ENCODE measurements at regions of chr19 and their contacts with region 1.

Region 1: GRCh38 chr19:55258828-55259539 is at the start of gene PPP6R1:
- DNase-seq: peak; percentile 99
- H3K4me3 Mint-ChIP-seq: peak within 1 kb of the TSS; percentile 88
- H3K27ac Mint-ChIP-seq: peak within 1 kb of the TSS; percentile 92
- H3K4me1 Mint-ChIP-seq: peaks cover 34% of the 10 kb centered on the region
- H3K27me3 Mint-ChIP-seq: no peaks in the 10 kb centered on the region
- CTCF ChIP-seq: no peak
- total RNA-seq, gene PPP6R1: 70.6 and 78.9 TPM in 2 replicates

Region 2: GRCh38 chr19:55014717-55015116 is 244.3 kb before region 1 on chr19:
- CTCF ChIA-PET with region 1: no interaction called
- POLR2A ChIA-PET with region 1: no interaction called
- intact Hi-C with region 1: no loop called
- DNase-seq: no peak
- H3K4me3 Mint-ChIP-seq: no peak overlapping the region
- H3K27ac Mint-ChIP-seq: no peak overlapping the region
- H3K4me1 Mint-ChIP-seq: no peaks in the 10 kb centered on the region
- H3K27me3 Mint-ChIP-seq: no peaks in the 10 kb centered on the region
- CTCF ChIP-seq: no peak

Region 3: DNA sequence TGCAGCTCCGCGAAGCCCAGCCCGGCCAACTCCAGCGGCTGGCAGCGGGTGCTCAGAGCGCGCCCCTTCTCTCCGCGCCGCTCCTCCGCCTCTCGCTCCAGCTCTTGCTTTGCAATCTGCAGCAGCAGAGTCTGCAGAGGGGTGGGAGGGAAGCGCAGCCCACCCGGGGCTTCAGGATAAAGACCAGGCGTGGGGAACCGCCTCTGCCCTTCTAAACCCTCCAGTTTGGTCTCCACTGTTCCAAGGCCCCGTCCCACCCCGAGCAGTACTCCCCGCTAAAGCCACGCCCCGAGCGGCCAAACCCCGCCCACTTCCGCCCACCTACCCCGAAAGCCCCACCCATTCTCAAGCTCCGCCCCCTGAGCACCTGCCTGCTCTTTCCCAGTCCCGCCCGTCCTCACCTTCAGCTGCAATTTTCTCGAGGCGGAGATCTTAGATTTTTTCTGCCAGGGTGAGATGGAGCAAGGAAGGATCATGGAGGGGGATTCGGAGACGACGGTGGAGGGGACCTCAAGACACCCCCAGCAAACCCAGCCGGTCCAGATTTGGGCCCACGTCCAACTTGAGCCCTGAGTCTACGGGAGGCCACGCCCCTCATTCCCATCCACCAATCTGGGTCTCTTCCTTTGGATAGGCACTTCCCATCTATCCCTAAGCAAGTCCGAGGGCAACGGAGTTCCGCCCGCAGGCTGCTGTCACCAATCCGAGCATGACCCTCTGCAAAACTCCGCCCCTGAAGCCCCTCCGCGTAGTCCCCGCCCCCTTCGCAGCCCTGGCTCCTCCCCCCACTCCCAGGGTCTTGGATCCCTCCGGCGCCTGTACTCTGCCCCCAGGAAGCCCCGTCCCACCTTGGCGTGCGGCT is 102.6 kb before region 1 on chr19:
- CTCF ChIA-PET with region 1: no interaction called
- POLR2A ChIA-PET with region 1: no interaction called
- intact Hi-C with region 1: no loop called
- DNase-seq: no peak
- H3K4me3 Mint-ChIP-seq: no peak overlapping the region
- H3K27ac Mint-ChIP-seq: no peak overlapping the region
- H3K4me1 Mint-ChIP-seq: peaks cover 27% of the 10 kb centered on the region
- H3K27me3 Mint-ChIP-seq: no peaks in the 10 kb centered on the region
- CTCF ChIP-seq: no peak

Region 4: GRCh38 chr19:55166530-55167268 is 92.3 kb before region 1 on chr19 and contains the start of gene DNAAF3:
- CTCF ChIA-PET with region 1: interaction called, 4 read pairs
- POLR2A ChIA-PET with region 1: interaction called, 19 read pairs
- intact Hi-C with region 1: loop called (anchors 5 kb)
- DNase-seq: peak; percentile 100
- H3K4me3 Mint-ChIP-seq: peak within 1 kb of the TSS; percentile 84
- H3K27ac Mint-ChIP-seq: peak within 1 kb of the TSS; percentile 93
- H3K4me1 Mint-ChIP-seq: peaks cover 10% of the 10 kb centered on the region
- H3K27me3 Mint-ChIP-seq: no peaks in the 10 kb centered on the region
- CTCF ChIP-seq: no peak
- total RNA-seq, gene DNAAF3: 3.9 and 4.9 TPM in 2 replicates

Region 5: DNA sequence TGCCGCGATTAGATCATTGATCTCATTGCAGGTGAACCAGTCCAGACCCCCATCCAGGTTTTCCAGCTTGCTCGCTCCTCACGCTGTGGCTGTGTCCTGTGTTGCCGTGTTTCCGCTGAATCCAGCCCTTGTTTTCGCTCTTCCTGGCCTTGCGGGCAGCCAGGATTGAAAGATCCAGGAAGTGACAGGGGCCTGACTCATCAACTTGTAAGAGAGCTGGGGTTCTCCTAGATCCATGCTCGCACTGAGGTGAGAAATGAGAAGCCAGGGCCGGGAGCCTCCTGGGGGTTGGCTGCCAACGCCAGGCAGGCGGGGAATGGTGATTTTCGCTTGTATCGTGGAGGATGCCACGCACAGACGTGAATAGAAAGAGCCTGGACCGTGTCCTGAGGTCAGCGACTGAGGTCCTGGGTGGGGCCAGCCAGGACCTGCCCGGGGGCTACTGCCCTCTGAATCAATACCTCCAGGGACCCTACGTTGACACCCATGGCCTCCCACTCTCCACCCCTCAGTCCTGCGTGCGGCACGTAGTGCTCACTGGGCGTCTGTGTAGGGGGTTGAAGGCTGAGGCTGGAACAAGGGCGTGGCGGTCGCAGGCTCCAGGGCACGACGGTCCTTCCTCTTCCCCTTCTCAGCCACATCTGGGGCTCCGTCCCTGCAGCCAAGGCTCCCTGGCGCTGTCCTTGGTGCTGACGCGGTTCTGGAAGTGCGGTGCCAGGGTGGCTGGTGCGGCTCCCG is 42.4 kb before region 1 on chr19:
- CTCF ChIA-PET with region 1: interaction called, 3 read pairs
- POLR2A ChIA-PET with region 1: interaction called, 52 read pairs
- intact Hi-C with region 1: loop called (anchors 1 kb)
- DNase-seq: peak; percentile 99
- H3K4me3 Mint-ChIP-seq: peak overlapping the region; percentile 78
- H3K27ac Mint-ChIP-seq: peak overlapping the region; percentile 64
- H3K4me1 Mint-ChIP-seq: peaks cover 16% of the 10 kb centered on the region
- H3K27me3 Mint-ChIP-seq: no peaks in the 10 kb centered on the region
- CTCF ChIP-seq: no peak

Region 6: GRCh38 chr19:55289117-55289796 is 30.3 kb after region 1 on chr19:
- CTCF ChIA-PET with region 1: interaction called, 4 read pairs
- POLR2A ChIA-PET with region 1: interaction called, 10 read pairs
- intact Hi-C with region 1: no loop called
- DNase-seq: no peak
- H3K4me3 Mint-ChIP-seq: no peak overlapping the region
- H3K27ac Mint-ChIP-seq: no peak overlapping the region
- H3K4me1 Mint-ChIP-seq: peaks cover 5% of the 10 kb centered on the region
- H3K27me3 Mint-ChIP-seq: no peaks in the 10 kb centered on the region
- CTCF ChIP-seq: no peak

Region 7: DNA sequence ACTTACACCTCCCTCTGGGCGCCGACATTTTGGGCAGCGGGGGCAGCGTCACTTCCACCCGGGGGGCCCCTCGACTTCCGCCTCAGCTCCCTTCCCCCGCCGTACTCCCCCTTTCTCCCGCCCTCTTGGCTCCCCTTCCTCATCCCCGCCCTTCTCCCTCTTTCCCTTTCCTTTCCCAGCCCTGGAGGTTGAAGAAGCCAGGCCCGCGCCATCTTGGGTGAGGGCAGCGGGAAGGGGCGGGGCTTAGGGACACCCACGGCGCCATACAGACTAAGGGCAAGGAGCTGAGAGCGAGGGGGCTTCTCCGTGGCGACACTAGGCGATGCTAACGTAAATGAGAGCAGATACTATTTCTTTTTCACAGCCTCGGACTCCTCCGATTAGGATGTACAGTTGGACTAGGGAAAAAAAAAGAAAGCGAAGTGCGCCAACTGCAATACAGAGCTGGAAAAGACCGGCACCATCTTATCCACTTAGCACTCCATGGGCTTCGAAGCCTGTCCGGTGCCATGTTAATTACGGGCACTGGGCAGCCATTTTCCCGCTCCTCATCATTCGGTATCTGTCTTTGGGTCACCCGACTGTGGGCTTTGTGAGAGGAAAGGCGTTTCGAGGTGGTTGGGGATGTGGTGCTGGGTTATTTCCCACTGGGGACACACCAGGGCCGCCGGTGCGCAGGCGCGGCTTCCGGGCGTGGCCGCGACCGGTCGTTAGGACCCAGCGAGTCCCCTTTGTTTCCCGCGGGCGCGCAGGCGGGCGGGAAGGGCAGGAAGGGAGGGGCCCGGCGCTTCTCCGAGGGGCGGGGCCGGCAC is 340.7 kb after region 1 on chr19 and contains the start of gene FIZ1:
- CTCF ChIA-PET with region 1: no interaction called
- POLR2A ChIA-PET with region 1: interaction called, 3 read pairs
- intact Hi-C with region 1: loop called (anchors 1 kb)
- DNase-seq: peak; percentile 100
- H3K4me3 Mint-ChIP-seq: peak within 1 kb of the TSS; percentile 97
- H3K27ac Mint-ChIP-seq: peak within 1 kb of the TSS; percentile 99
- H3K4me1 Mint-ChIP-seq: peaks cover 39% of the 10 kb centered on the region
- H3K27me3 Mint-ChIP-seq: no peaks in the 10 kb centered on the region
- CTCF ChIP-seq: no peak
- total RNA-seq, gene FIZ1: 13.5 and 16.3 TPM in 2 replicates